ENCODE measurements at regions of chr21 and their contacts with region 1.

Region 1: GRCh38 chr21:42818328-42818749 is 61.0 kb downstream of the WDR4 start:
- DNase-seq: peak; percentile 39
- ATAC-seq: peak; percentile 89
- H3K4me3 ChIP-seq: no peak overlapping the region
- H3K27ac ChIP-seq: no peak overlapping the region
- H3K4me1 ChIP-seq: no peaks in the 10 kb centered on the region
- H3K27me3 ChIP-seq: no peaks in the 10 kb centered on the region; the same call in 1 of the 2 replicates
- CTCF ChIP-seq: peak; percentile 74
- POLR2A ChIP-seq: no peak
- RAD21 ChIP-seq: peak; percentile 71

Region 2: GRCh38 chr21:42337830-42338728 is 480.3 kb before region 1 on chr21:
- CTCF ChIA-PET with region 1: no interaction called
- POLR2A ChIA-PET with region 1: no interaction called
- dilution Hi-C with region 1: no loop called
- in situ Hi-C with region 1: no loop called
- intact Hi-C with region 1: no loop called
- DNase-seq: peak; percentile 35
- ATAC-seq: peak; percentile 84
- H3K4me3 ChIP-seq: no peak overlapping the region
- H3K27ac ChIP-seq: no peak overlapping the region
- H3K4me1 ChIP-seq: no peaks in the 10 kb centered on the region; the same call in 1 of the 2 replicates
- H3K27me3 ChIP-seq: peaks cover 14% of the 10 kb centered on the region
- CTCF ChIP-seq: peak; percentile 41
- POLR2A ChIP-seq: no peak
- RAD21 ChIP-seq: no peak

Region 3: DNA sequence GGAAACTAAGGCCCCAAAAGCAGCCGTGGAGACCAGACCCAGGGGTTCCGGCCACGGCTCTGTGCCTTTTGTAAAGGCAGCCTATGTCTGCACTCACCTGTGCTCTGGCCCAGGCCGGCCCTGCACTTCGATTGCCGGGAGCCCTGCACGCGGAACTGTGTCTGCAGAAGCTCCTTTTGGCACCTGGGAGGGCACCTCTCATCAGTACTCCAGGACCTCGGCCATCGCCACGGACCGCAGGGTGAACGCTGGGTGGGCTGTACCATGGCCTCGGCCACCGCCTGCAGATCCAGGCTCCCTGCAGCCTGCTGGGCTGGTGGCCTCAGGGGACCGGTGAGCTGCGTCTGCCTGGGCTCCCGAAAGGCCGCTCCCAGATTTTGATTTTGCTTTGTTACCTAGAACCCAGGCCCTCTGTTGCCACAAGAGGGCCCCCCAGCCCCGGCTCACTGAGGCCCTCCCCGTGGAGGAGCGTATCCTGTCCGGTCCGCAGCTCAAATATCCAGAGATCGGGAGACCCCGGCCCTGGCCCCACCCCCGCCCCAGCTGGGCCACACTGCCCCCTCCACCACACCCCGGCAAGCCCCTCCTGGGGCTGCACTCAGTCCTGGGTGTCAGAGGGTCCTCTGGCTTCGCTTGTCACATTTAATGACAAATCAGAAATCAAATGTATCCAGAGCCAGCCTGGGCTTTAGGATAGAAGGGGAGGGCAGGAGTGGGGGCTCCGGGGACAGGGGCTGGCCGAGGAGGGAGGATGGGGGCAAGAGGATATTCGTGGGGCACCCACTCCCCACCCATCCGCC is 225.1 kb before region 1 on chr21:
- CTCF ChIA-PET with region 1: interaction called, 17 read pairs
- POLR2A ChIA-PET with region 1: no interaction called
- dilution Hi-C with region 1: no loop called
- in situ Hi-C with region 1: no loop called
- intact Hi-C with region 1: loop called (anchors 2 kb)
- DNase-seq: peak; percentile 26
- ATAC-seq: peak; percentile 98
- H3K4me3 ChIP-seq: no peak overlapping the region
- H3K27ac ChIP-seq: no peak overlapping the region
- H3K4me1 ChIP-seq: no peaks in the 10 kb centered on the region
- H3K27me3 ChIP-seq: peaks cover 9% of the 10 kb centered on the region; the same call in 1 of the 2 replicates
- CTCF ChIP-seq: peak; percentile 64
- POLR2A ChIP-seq: no peak
- RAD21 ChIP-seq: peak; percentile 79

Region 4: GRCh38 chr21:42652527-42653230 is 165.7 kb before region 1 on chr21:
- CTCF ChIA-PET with region 1: interaction called, 3 read pairs
- POLR2A ChIA-PET with region 1: no interaction called
- dilution Hi-C with region 1: no loop called
- in situ Hi-C with region 1: no loop called
- intact Hi-C with region 1: loop called (anchors 10 kb)
- DNase-seq: peak; percentile 31
- ATAC-seq: peak; percentile 60
- H3K4me3 ChIP-seq: peak overlapping the region; percentile 39; the same call in 1 of the 2 replicates
- H3K27ac ChIP-seq: no peak overlapping the region
- H3K4me1 ChIP-seq: peaks cover 2% of the 10 kb centered on the region; the same call in 1 of the 2 replicates
- H3K27me3 ChIP-seq: peaks cover 28% of the 10 kb centered on the region
- CTCF ChIP-seq: peak; percentile 35; the same call in 1 of the 2 replicates
- POLR2A ChIP-seq: no peak
- RAD21 ChIP-seq: peak; percentile 44

Measured in IMR-90 (cell line).